ENCODE measurements at regions of chr1 and their contacts with region 1.

Region 1: GRCh38 chr1:53450225-53450624 is 9.0 kb upstream of the DMRTB1 start:
- DNase-seq: peak; percentile 62
- H3K4me3 ChIP-seq: no peak overlapping the region
- H3K27ac ChIP-seq: no peak overlapping the region
- H3K4me1 ChIP-seq: peaks cover 0 to 11% of the 10 kb centered on the region in 2 experiments; a peak in 1 of 4 replicates
- H3K27me3 ChIP-seq: no peaks in the 10 kb centered on the region
- CTCF ChIP-seq: peak; percentile 55
- EP300 ChIP-seq: no peak
- RAD21 ChIP-seq: peak; percentile 63

Region 2: DNA sequence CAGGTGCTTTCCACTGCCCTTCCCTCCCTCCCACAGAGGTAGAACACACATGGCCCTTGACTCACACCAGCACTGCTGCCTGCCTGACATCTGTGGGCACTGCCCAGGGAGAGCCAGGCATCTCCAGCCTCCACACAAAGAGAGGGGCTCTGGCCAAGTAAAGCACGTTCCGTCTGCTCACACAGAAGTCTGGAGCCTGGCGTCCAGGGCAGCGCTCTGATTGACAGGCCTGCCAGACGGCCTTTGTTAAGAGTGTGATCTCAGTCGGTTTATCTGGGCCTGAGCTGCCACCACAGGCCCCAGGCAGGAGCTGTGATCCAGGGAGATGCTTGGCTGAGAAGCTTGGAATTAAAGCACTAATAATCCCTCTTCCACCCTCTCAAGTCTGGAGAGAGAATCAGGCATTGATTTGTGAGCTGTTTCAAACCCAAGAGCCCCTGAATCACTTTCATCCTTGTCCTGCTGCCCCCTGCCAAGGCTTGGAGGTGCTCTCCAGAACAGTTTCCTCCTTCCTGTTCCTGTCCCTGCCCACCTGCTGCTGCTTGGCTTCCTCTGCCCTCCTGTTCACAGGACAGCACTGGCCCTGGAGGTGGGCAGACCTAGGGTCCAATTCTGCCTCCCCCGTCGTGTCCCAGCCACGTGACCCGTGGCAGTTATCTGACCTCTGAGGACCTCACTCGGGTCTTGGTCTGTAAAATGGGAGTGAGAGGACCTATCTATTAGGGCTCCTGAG is 12.7 kb after region 1 on chr1:
- CTCF ChIA-PET with region 1: interaction called, 21 read pairs
- POLR2A ChIA-PET with region 1: no interaction called
- DNase-seq: peak; percentile 81
- H3K4me3 ChIP-seq: no peak overlapping the region
- H3K27ac ChIP-seq: peak overlapping the region in 1 of 2 experiments; percentile 76; a peak in 2 of 4 replicates
- H3K4me1 ChIP-seq: peaks cover 0 to 18% of the 10 kb centered on the region in 2 experiments; a peak in 1 of 4 replicates
- H3K27me3 ChIP-seq: no peaks in the 10 kb centered on the region
- CTCF ChIP-seq: no peak
- EP300 ChIP-seq: peak in 1 of 2 experiments; percentile 36; a peak in 1 of 4 replicates
- RAD21 ChIP-seq: no peak

Region 3: DNA sequence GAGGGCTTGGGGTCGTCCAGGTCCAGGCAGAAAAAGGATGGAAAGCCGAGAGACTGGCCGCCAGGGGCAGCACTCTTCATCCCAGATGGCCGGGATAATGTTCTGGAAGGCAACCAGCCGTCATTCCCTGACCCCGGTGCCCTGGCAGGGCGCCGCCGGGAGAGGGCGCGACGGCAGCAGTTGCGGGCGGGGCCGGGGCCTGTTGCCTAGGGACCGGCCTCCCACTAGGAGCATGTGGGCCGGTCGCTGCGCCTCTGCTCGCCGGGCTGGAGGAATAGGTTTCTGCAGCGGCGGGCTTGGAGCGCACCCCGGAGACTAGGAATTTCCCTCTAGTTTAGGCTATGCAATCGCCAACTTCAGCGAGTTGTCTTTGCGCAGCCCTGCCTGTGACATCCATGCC is 19.9 kb after region 1 on chr1:
- CTCF ChIA-PET with region 1: interaction called, 21 read pairs
- POLR2A ChIA-PET with region 1: no interaction called
- DNase-seq: no peak
- H3K4me3 ChIP-seq: peak overlapping the region in 1 of 2 experiments; percentile 46; a peak in 1 of 4 replicates
- H3K27ac ChIP-seq: no peak overlapping the region
- H3K4me1 ChIP-seq: peaks cover 0 to 7% of the 10 kb centered on the region in 2 experiments; a peak in 1 of 4 replicates
- H3K27me3 ChIP-seq: no peaks in the 10 kb centered on the region; the same call in 1 of the 2 replicates
- CTCF ChIP-seq: no peak
- EP300 ChIP-seq: no peak
- RAD21 ChIP-seq: no peak

Region 4: DNA sequence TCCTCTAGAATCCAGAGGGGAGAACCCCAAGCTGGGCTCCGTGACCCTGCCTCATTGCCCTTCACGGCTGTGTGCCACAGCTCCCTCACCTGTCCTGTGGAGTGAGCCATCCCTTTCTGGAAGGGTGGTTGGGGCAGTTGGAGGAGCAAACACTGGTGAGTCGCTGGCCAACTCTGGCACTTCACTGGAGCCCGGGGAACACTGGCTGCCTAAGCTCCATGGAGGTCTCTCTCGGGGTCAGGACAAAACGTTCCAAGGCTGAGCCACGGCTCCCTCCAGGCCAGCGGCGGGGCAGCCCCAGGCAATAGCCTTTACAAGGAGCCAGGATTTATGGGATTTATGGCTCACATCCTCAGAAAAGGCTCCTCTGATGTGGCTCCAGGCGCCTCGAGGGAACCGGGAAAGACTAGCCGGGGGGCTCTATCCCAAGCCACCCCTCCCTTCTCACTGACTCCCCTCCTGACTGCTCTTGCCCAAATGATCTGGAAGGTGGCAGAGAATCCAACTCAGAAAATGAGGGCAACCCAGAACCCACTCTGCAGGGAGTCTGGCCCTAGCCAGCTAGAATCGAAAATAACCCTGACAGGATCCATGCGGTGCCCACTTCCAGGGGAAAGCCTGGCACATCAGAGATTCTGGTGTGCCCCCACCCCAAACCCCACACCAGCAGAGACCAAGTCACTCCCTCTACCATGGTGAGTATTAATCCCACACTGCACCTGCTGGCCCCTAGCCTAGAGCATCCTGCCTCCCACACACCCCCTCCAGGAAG is 213.5 kb after region 1 on chr1:
- CTCF ChIA-PET with region 1: no interaction called
- POLR2A ChIA-PET with region 1: no interaction called
- DNase-seq: no peak
- H3K4me3 ChIP-seq: no peak overlapping the region
- H3K27ac ChIP-seq: no peak overlapping the region
- H3K4me1 ChIP-seq: peaks cover 0 to 2% of the 10 kb centered on the region in 2 experiments; a peak in 1 of 4 replicates
- H3K27me3 ChIP-seq: no peaks in the 10 kb centered on the region
- CTCF ChIP-seq: no peak
- EP300 ChIP-seq: no peak
- RAD21 ChIP-seq: no peak

Region 5: DNA sequence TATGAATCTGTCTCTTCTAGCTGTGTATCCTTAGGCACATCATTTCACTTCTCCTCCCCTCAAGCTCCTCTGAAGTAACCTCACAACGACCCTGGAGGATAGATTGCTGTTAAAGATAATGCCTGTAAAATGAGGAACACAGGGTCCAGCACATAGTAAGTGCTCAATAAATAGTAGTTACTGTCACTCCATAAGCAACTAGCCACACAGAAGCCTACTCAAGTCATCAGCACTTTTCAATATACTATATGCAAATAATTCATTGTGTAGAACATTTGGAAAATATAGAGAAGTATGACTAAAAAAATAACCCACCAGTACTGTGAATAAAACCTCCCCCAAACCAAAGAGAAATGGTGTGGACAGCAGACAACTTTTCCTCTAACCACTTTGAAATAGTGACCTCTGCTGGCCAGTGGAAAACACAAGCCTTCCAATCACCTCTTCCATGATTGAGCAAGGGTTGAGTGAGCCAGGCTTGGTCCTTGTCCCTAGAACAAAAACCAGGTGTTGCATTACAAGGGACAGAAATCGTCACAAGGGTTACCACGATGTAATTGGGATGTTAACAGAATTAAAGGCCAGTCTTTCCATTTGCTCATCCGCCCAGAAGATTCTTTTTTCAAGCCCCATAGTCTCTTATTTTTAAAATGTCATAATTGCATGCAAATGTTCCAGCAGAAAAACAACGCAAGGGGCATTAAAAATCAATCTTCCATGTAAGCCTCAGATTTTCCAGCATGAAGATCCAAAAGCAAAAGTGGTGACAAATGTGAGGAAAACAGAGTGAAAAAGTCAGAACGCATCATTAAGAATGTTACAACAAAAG is 304.5 kb after region 1 on chr1:
- CTCF ChIA-PET with region 1: interaction called, 10 read pairs
- POLR2A ChIA-PET with region 1: no interaction called
- DNase-seq: peak; percentile 58
- H3K4me3 ChIP-seq: no peak overlapping the region
- H3K27ac ChIP-seq: no peak overlapping the region
- H3K4me1 ChIP-seq: no peaks in the 10 kb centered on the region
- H3K27me3 ChIP-seq: no peaks in the 10 kb centered on the region
- CTCF ChIP-seq: peak; percentile 87
- EP300 ChIP-seq: no peak
- RAD21 ChIP-seq: peak; percentile 87

Region 6: DNA sequence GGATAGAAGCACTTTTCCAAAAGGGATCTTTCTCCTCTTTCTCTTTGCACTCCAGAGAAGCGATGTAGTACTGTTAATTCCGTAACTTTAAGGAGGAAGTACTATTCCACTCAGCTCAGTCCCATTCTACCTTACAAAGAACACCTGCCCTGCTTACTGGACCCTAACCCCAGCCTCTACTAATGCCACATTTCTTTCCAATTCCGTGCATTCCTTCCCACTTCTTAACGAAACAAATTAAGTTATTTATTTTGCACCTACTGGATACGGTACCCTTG is 387.4 kb after region 1 on chr1:
- CTCF ChIA-PET with region 1: no interaction called
- POLR2A ChIA-PET with region 1: no interaction called
- DNase-seq: no peak
- H3K4me3 ChIP-seq: peak overlapping the region; percentile 63 to 95
- H3K27ac ChIP-seq: peak overlapping the region; percentile 90 to 99
- H3K4me1 ChIP-seq: peaks cover 3 to 12% of the 10 kb centered on the region in 2 experiments; a peak in 3 of 4 replicates
- H3K27me3 ChIP-seq: no peaks in the 10 kb centered on the region
- CTCF ChIP-seq: no peak
- EP300 ChIP-seq: no peak
- RAD21 ChIP-seq: no peak